Endothelial cell of umbilical vein (primary cell): ENCODE measurements at regions of chr17 and their contacts with region 1.

Region 1: GRCh38 chr17:6340708-6341107 is 94.2 kb downstream of the AIPL1 start:
- DNase-seq: no peak
- H3K4me3 ChIP-seq: no peak overlapping the region
- H3K27ac ChIP-seq: no peak overlapping the region
- H3K4me1 ChIP-seq: no peaks in the 10 kb centered on the region
- H3K27me3 ChIP-seq: peaks cover 0 to 3% of the 10 kb centered on the region in 2 experiments
- CTCF ChIP-seq: no peak
- POLR2A ChIP-seq: no peak

Region 2: GRCh38 chr17:6374761-6375312 is 34.1 kb after region 1 on chr17:
- CTCF ChIA-PET with region 1: no interaction called
- POLR2A ChIA-PET with region 1: no interaction called
- dilution Hi-C with region 1: no loop called
- intact Hi-C with region 1: loop called (anchors 1 kb)
- DNase-seq: peak; percentile 11
- H3K4me3 ChIP-seq: no peak overlapping the region
- H3K27ac ChIP-seq: no peak overlapping the region
- H3K4me1 ChIP-seq: no peaks in the 10 kb centered on the region
- H3K27me3 ChIP-seq: peaks cover 0 to 8% of the 10 kb centered on the region in 2 experiments
- CTCF ChIP-seq: no peak
- POLR2A ChIP-seq: no peak

Region 3: DNA sequence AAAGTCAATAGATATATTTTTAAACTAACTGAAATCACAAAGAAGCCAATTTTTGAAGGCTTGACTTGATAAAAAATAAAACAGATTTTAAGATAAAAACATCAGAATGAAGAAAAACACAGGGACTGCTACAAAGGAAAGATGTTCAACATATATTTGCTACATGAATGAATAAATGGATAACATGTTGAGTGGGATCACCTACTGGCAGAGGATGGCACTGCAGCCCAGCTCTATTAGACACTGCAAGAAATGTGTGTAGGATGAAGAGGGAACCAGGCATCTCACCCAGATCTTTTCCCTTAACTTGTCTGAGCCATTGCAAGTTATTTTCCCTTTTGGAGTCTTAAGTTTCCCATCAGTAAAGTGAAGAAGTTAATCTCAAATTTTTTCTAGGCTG is 90.1 kb after region 1 on chr17:
- CTCF ChIA-PET with region 1: no interaction called
- POLR2A ChIA-PET with region 1: no interaction called
- dilution Hi-C with region 1: no loop called
- intact Hi-C with region 1: no loop called
- DNase-seq: no peak
- H3K4me3 ChIP-seq: no peak overlapping the region
- H3K27ac ChIP-seq: no peak overlapping the region
- H3K4me1 ChIP-seq: no peaks in the 10 kb centered on the region
- H3K27me3 ChIP-seq: no peaks in the 10 kb centered on the region
- CTCF ChIP-seq: peak; percentile 20 to 35
- POLR2A ChIP-seq: no peak